Mammary epithelial cell (primary cell): ENCODE measurements at regions of chr15 and their contacts with region 1.

Region 1: DNA sequence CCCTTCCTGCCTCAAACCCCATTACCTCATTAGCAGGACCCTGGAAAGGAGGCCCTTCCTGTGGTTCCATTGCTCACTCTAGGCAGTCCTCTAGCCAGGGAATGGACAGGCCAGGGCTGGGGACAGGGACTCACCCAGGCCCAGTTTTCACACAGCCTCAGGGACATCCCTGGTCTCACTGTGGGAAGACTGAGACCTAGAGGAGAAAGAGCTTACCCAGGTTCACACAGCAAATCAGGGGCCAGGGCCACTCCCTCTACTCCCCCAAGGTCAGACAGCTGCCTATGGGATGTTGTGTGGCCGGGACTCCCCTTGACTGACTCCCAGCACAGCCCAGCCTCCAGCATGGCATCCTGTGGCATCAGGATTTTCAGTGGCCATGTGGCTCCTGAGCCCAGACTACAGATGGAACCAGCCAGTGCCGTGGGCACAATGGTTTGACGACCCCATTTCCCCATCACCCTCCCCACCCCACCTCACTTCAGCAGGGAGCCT is 49.3 kb downstream of the ADAMTS7 start:
- DNase-seq: no peak
- H3K4me3 ChIP-seq: no peak overlapping the region
- H3K27ac ChIP-seq: no peak overlapping the region
- H3K4me1 ChIP-seq: peaks cover 19% of the 10 kb centered on the region
- H3K27me3 ChIP-seq: no peaks in the 10 kb centered on the region
- CTCF ChIP-seq: no peak

Region 2: GRCh38 chr15:78481917-78482316 is 280.0 kb before region 1 on chr15:
- CTCF ChIA-PET with region 1: no interaction called
- dilution Hi-C with region 1: no loop called
- in situ Hi-C with region 1: no loop called
- intact Hi-C with region 1: no loop called
- DNase-seq: no peak
- H3K4me3 ChIP-seq: no peak overlapping the region
- H3K27ac ChIP-seq: no peak overlapping the region
- H3K4me1 ChIP-seq: no peaks in the 10 kb centered on the region
- H3K27me3 ChIP-seq: no peaks in the 10 kb centered on the region
- CTCF ChIP-seq: no peak

Region 3: DNA sequence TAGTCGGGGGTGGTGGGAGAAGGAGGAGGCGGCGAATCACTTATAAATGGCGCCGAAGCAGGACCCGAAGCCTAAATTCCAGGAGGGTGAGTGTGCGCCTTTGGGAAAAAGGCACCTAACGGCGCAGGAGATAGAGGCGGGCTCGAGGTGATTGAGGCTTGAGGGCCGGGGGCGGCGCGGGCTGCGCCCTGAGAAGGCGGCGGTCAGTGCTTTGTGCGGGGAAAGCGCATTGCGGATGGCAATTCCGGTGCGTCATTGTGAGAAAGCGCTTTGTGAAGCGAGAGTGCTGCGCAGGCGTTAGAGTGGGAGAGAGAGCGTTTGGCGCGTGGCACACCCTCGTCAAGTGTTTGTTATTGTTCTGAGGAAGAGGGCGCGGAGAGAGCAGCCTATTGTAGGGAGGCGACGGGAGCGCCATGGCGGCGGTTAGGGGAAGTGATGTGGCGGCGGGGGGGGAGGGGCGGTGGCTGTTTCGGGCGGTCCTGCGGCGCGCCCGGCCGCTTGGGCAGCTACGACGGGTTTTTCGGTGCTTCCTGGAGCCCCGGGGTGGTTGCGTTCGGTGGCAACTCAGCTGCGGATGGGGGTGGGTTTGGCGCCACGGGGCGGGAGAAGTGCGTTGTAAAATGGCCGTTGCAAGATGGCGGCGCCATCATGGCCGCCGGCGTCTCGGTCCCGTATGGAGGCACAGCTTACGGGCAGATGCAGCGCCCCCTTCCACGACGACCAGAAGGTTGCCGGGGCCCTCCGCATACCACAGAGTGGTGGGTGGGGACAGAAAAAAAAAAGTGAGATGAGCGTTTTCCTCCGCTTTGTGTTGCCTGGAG is 111.2 kb after region 1 on chr15:
- CTCF ChIA-PET with region 1: no interaction called
- dilution Hi-C with region 1: no loop called
- in situ Hi-C with region 1: no loop called
- intact Hi-C with region 1: loop called (anchors 5 kb)
- DNase-seq: peak; percentile 87
- H3K4me3 ChIP-seq: peak overlapping the region; percentile 63 to 100 (median 95)
- H3K27ac ChIP-seq: peak overlapping the region; percentile 97
- H3K4me1 ChIP-seq: peaks cover 8% of the 10 kb centered on the region
- H3K27me3 ChIP-seq: no peaks in the 10 kb centered on the region
- CTCF ChIP-seq: no peak

Region 4: GRCh38 chr15:79184465-79184892 is 422.5 kb after region 1 on chr15:
- CTCF ChIA-PET with region 1: no interaction called
- dilution Hi-C with region 1: no loop called
- in situ Hi-C with region 1: no loop called
- intact Hi-C with region 1: loop called (anchors 2 kb)
- DNase-seq: peak; percentile 42
- H3K4me3 ChIP-seq: no peak overlapping the region
- H3K27ac ChIP-seq: no peak overlapping the region
- H3K4me1 ChIP-seq: peaks cover 2% of the 10 kb centered on the region
- H3K27me3 ChIP-seq: no peaks in the 10 kb centered on the region
- CTCF ChIP-seq: peak; percentile 97